ENCODE measurements at regions of chr3 and their contacts with region 1.

Region 1: GRCh38 chr3:40971191-40972168 is 227.8 kb upstream of the CTNNB1 start:
- DNase-seq: peak; percentile 99
- H3K4me3 ChIP-seq: no peak overlapping the region
- H3K27ac ChIP-seq: peak overlapping the region; percentile 91
- H3K4me1 ChIP-seq: peaks cover 57% of the 10 kb centered on the region
- H3K27me3 ChIP-seq: no peaks in the 10 kb centered on the region
- CTCF ChIP-seq: no peak
- POLR2A ChIP-seq: peak; percentile 31

Region 2: DNA sequence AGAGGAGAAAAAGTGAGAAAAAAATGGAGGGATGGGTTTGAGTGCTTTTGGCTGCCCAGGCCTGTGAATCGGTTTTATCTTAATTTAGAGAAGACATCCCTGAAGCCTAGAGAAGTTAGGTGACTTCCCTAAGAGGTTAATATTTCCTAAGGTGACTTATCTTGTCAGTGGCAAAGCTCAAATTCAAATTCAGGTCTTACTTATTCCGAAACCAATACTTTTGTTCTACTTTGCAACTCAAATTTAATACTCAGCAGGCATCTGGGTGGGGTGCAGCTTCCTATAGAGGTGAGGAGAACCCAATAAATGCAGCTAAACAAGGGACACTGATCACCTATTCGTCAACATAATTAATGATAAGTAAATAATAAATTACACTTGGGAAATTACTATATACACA is 1216.9 kb before region 1 on chr3:
- CTCF ChIA-PET with region 1: no interaction called
- POLR2A ChIA-PET with region 1: no interaction called
- dilution Hi-C with region 1: no loop called
- intact Hi-C with region 1: loop called (anchors 10 kb)
- DNase-seq: no peak
- H3K4me3 ChIP-seq: no peak overlapping the region
- H3K27ac ChIP-seq: no peak overlapping the region
- H3K4me1 ChIP-seq: peaks cover 61% of the 10 kb centered on the region
- H3K27me3 ChIP-seq: no peaks in the 10 kb centered on the region
- CTCF ChIP-seq: no peak
- POLR2A ChIP-seq: no peak

Region 3: DNA sequence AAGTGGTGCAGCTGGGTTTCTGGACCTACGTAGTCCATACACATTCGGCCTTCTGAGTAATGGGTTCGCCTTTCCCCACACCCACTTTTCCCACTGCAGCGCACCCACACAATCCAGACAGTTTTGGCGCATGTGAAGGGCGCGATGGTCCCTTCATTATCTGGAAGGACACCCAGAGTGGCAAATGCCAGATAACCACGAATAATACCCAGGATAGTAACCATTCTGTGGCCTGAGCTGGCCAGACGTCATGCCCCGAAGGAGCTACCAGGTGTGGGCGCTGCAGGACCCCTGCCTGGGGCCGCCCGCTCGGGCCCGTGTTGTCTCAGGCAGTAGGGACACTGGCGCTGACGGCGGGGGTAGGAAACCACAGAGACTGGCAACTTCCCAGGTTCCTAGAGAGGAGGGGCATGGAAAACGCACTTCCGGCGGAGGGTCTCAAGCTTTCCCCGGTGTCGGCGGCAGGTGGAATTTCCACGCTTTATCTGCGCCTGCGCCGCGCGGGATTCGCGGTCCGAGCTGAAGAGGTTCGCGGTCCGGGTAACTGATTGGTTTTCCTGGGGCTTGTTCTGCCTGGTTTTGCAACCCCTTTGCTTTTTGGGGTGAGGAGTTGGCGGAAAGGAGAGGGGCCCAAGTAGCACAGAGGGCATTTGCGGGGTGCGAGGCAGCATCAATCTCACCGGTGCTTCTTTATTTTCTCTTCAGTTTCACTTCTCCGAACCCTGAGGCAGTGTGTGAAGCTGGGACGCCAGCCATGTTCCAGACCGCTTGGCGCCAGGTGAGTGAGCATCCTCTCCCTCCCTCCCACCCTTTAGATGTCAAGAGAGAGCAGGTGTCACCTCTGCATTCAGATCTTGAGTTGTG is 465.6 kb before region 1 on chr3 and contains the start of gene ZNF620:
- CTCF ChIA-PET with region 1: no interaction called
- POLR2A ChIA-PET with region 1: no interaction called
- dilution Hi-C with region 1: no loop called
- intact Hi-C with region 1: loop called (anchors 1 kb)
- DNase-seq: peak; percentile 88
- H3K4me3 ChIP-seq: peak within 1 kb of the TSS; percentile 66 to 78 (median 76)
- H3K27ac ChIP-seq: peak within 1 kb of the TSS; percentile 96
- H3K4me1 ChIP-seq: peaks cover 19% of the 10 kb centered on the region
- H3K27me3 ChIP-seq: no peaks in the 10 kb centered on the region
- CTCF ChIP-seq: peak; percentile 34 to 51
- POLR2A ChIP-seq: no peak
- total RNA-seq, gene ZNF620: 3.6 and 4.0 TPM in 2 replicates

Region 4: GRCh38 chr3:40847551-40847992 is 123.9 kb before region 1 on chr3:
- CTCF ChIA-PET with region 1: no interaction called
- POLR2A ChIA-PET with region 1: no interaction called
- dilution Hi-C with region 1: no loop called
- intact Hi-C with region 1: loop called (anchors 1 kb)
- DNase-seq: peak; percentile 73
- H3K4me3 ChIP-seq: no peak overlapping the region
- H3K27ac ChIP-seq: no peak overlapping the region
- H3K4me1 ChIP-seq: no peaks in the 10 kb centered on the region
- H3K27me3 ChIP-seq: peaks cover 0 to 4% of the 10 kb centered on the region in 2 experiments
- CTCF ChIP-seq: peak in 1 of 2 donors; percentile 39
- POLR2A ChIP-seq: no peak

Region 5: GRCh38 chr3:40920041-40920440 is 51.4 kb before region 1 on chr3:
- CTCF ChIA-PET with region 1: interaction called, 3 read pairs
- POLR2A ChIA-PET with region 1: no interaction called
- dilution Hi-C with region 1: no loop called
- intact Hi-C with region 1: loop called (anchors 2 kb)
- DNase-seq: no peak
- H3K4me3 ChIP-seq: no peak overlapping the region
- H3K27ac ChIP-seq: no peak overlapping the region
- H3K4me1 ChIP-seq: peaks cover 4% of the 10 kb centered on the region
- H3K27me3 ChIP-seq: no peaks in the 10 kb centered on the region
- CTCF ChIP-seq: no peak
- POLR2A ChIP-seq: no peak

Region 6: GRCh38 chr3:40994611-40995330 is 23.3 kb after region 1 on chr3:
- CTCF ChIA-PET with region 1: no interaction called
- POLR2A ChIA-PET with region 1: no interaction called
- dilution Hi-C with region 1: no loop called
- intact Hi-C with region 1: no loop called
- DNase-seq: no peak
- H3K4me3 ChIP-seq: no peak overlapping the region
- H3K27ac ChIP-seq: no peak overlapping the region
- H3K4me1 ChIP-seq: no peaks in the 10 kb centered on the region
- H3K27me3 ChIP-seq: no peaks in the 10 kb centered on the region
- CTCF ChIP-seq: no peak
- POLR2A ChIP-seq: no peak

Region 7: GRCh38 chr3:41095702-41096101 is 124.2 kb after region 1 on chr3:
- CTCF ChIA-PET with region 1: no interaction called
- POLR2A ChIA-PET with region 1: no interaction called
- dilution Hi-C with region 1: no loop called
- intact Hi-C with region 1: no loop called
- DNase-seq: peak; percentile 40
- H3K4me3 ChIP-seq: no peak overlapping the region
- H3K27ac ChIP-seq: no peak overlapping the region
- H3K4me1 ChIP-seq: no peaks in the 10 kb centered on the region
- H3K27me3 ChIP-seq: peaks cover 0 to 4% of the 10 kb centered on the region in 2 experiments
- CTCF ChIP-seq: peak in 1 of 2 donors; percentile 12
- POLR2A ChIP-seq: no peak

Region 8: GRCh38 chr3:41131224-41131623 is 159.7 kb after region 1 on chr3:
- CTCF ChIA-PET with region 1: no interaction called
- POLR2A ChIA-PET with region 1: no interaction called
- dilution Hi-C with region 1: no loop called
- intact Hi-C with region 1: no loop called
- DNase-seq: no peak
- H3K4me3 ChIP-seq: no peak overlapping the region
- H3K27ac ChIP-seq: no peak overlapping the region
- H3K4me1 ChIP-seq: no peaks in the 10 kb centered on the region
- H3K27me3 ChIP-seq: no peaks in the 10 kb centered on the region
- CTCF ChIP-seq: no peak
- POLR2A ChIP-seq: no peak

Region 9: DNA sequence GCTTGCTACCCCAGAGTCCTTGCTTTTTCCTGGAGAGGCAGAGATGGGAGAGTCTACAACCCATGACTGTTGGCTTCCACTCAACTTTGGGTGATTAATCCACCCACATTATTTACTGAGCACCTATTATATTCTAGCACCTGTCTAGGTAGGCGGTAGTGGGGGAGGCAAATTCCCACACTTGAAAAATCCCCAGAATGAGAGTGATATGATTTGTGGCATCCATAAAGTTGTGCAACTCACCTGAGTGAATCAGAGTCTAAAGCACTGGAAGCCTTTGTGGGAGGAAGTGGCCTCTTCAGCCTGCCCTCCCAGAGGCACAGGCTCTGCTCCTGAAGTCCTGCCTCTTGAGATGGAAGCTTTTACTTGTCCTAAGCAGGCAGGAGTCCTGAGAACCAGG is 187.5 kb after region 1 on chr3:
- CTCF ChIA-PET with region 1: no interaction called
- POLR2A ChIA-PET with region 1: no interaction called
- dilution Hi-C with region 1: no loop called
- intact Hi-C with region 1: loop called (anchors 2 kb)
- DNase-seq: no peak
- H3K4me3 ChIP-seq: no peak overlapping the region
- H3K27ac ChIP-seq: no peak overlapping the region
- H3K4me1 ChIP-seq: peaks cover 5% of the 10 kb centered on the region
- H3K27me3 ChIP-seq: no peaks in the 10 kb centered on the region
- CTCF ChIP-seq: no peak
- POLR2A ChIP-seq: no peak

Region 10: GRCh38 chr3:42043027-42043796 is 1071.7 kb after region 1 on chr3:
- CTCF ChIA-PET with region 1: no interaction called
- POLR2A ChIA-PET with region 1: no interaction called
- dilution Hi-C with region 1: no loop called
- intact Hi-C with region 1: loop called (anchors 10 kb)
- DNase-seq: peak; percentile 98
- H3K4me3 ChIP-seq: no peak overlapping the region
- H3K27ac ChIP-seq: peak overlapping the region; percentile 91
- H3K4me1 ChIP-seq: peaks cover 35% of the 10 kb centered on the region
- H3K27me3 ChIP-seq: no peaks in the 10 kb centered on the region
- CTCF ChIP-seq: no peak
- POLR2A ChIP-seq: peak; percentile 32